CD14-positive monocyte (primary cell): ENCODE measurements at regions of chr12 and their contacts with region 1.

Region 1: DNA sequence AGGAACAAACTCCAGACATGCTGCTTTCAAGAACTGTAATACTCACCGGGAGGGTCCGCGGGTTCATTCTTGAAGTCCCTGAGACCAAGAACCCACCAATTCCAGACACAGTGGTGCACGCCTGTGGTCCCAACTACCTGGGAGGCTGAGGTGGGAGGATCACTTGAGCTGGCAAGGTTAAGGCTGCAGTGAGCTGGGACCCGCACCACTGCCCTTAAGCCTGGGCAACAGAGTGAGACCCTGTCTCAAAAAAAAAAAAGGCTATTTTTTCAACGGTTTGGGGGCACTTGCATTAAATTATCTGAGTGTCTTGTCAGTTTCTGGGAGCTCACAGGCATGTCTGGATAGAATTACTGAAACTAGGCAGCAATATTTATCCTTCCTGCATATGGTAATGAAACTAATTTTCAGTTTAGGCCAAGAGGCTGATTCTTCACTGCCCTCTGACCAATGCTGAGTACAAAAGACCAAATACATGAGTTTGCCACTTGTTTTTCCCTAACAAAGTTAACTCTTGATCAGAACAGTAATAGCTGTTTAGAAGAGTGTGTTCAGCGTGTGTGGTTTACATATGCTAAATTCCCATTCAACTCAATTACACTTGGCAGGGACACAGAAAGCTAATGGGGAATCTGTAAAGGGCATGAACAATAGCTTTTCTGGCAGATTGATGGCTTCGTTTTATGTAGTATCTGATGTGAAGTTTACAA is 65.8 kb upstream of the RASSF3 start:
- DNase-seq: no peak
- H3K4me3 ChIP-seq: no peak overlapping the region
- H3K4me3 Mint-ChIP-seq: no peak overlapping the region
- H3K27ac ChIP-seq: no peak overlapping the region
- H3K27ac Mint-ChIP-seq: no peak overlapping the region
- H3K4me1 ChIP-seq: peaks cover 0 to under 1% of the 10 kb centered on the region in 2 donors
- H3K4me1 Mint-ChIP-seq: peaks cover 3% of the 10 kb centered on the region
- H3K27me3 ChIP-seq: peaks cover 0 to 6% of the 10 kb centered on the region in 2 donors
- H3K27me3 Mint-ChIP-seq: peaks cover 9 to 31% (median 9%) of the 10 kb centered on the region in 3 donors
- CTCF ChIP-seq: no peak

Region 2: GRCh38 chr12:64065881-64066451 is 478.6 kb before region 1 on chr12:
- intact Hi-C with region 1: no loop called
- DNase-seq: no peak
- H3K4me3 ChIP-seq: no peak overlapping the region
- H3K4me3 Mint-ChIP-seq: no peak overlapping the region
- H3K27ac ChIP-seq: no peak overlapping the region
- H3K27ac Mint-ChIP-seq: no peak overlapping the region
- H3K4me1 ChIP-seq: no peaks in the 10 kb centered on the region
- H3K4me1 Mint-ChIP-seq: no peaks in the 10 kb centered on the region
- H3K27me3 ChIP-seq: no peaks in the 10 kb centered on the region
- H3K27me3 Mint-ChIP-seq: peaks cover 0 to 1% (median 0%) of the 10 kb centered on the region in 3 donors
- CTCF ChIP-seq: no peak

Region 3: DNA sequence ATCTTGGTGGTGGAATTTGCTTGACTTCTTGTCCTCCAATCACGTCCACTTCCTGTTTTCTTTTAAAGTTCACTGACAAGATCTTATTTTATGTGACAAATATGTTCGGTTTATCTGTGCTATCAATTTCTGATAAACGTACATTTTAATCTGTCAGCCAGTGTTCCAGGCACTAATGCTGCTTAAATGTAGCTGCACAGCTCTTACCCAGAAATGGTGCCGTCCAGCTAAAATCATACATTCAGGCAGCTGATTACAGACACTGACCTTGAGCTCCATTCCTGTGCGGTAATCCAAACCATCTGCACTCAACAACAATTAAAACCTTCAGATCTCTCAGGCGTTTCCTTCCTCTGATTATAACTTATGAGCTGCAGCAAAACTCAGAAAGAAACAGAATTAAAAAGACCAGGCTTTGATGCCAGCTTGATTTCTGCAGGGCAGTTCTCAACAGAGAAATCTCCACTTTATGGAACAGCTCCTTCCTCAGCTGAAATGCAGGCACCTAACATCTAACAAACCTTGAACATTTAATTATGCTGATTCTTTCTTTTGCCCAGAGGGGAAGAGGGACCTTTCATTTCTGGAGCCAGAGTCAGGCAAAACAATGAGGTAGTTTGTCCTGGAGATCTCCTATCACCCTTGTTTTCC is 39.4 kb after region 1 on chr12:
- intact Hi-C with region 1: loop called in 1 of 2 experiments (anchors 5 kb)
- DNase-seq: peak; percentile 25 to 47 (median 36)
- H3K4me3 ChIP-seq: peak overlapping the region; percentile 14 to 69 (median 65)
- H3K4me3 Mint-ChIP-seq: peak overlapping the region; percentile 71 to 85
- H3K27ac ChIP-seq: peak overlapping the region; percentile 17 to 85
- H3K27ac Mint-ChIP-seq: peak overlapping the region; percentile 72 to 90 (median 86)
- H3K4me1 ChIP-seq: peaks cover 29% of the 10 kb centered on the region in 2 donors
- H3K4me1 Mint-ChIP-seq: peaks cover 31% of the 10 kb centered on the region
- H3K27me3 ChIP-seq: no peaks in the 10 kb centered on the region
- H3K27me3 Mint-ChIP-seq: peaks cover 2 to 5% (median 3%) of the 10 kb centered on the region in 3 donors
- CTCF ChIP-seq: no peak

Region 4: GRCh38 chr12:64780531-64781279 is 236.2 kb after region 1 on chr12:
- intact Hi-C with region 1: loop called in 1 of 2 experiments (anchors 10 kb)
- DNase-seq: peak in 2 of 3 donors; percentile 23 to 45
- H3K4me3 ChIP-seq: peak overlapping the region; percentile 46 to 77 (median 54)
- H3K4me3 Mint-ChIP-seq: peak overlapping the region; percentile 93 to 95
- H3K27ac ChIP-seq: no peak overlapping the region
- H3K27ac Mint-ChIP-seq: peak overlapping the region in 1 of 7 donors; percentile 80
- H3K4me1 ChIP-seq: peaks cover 24 to 31% of the 10 kb centered on the region in 2 donors
- H3K4me1 Mint-ChIP-seq: peaks cover 25% of the 10 kb centered on the region
- H3K27me3 ChIP-seq: peaks cover 44 to 58% of the 10 kb centered on the region in 2 donors
- H3K27me3 Mint-ChIP-seq: peaks cover 58 to 72% (median 59%) of the 10 kb centered on the region in 3 donors
- CTCF ChIP-seq: no peak